SK-N-SH (cell line): ENCODE measurements at regions of chr11 and their contacts with region 1.

Region 1: GRCh38 chr11:58524232-58525036 is 16.5 kb upstream of the OR5B21 start:
- DNase-seq: peak; percentile 61
- H3K4me3 ChIP-seq: peak overlapping the region in 1 of 2 experiments; percentile 13; a peak in 1 of 4 replicates
- H3K27ac ChIP-seq: no peak overlapping the region
- H3K4me1 ChIP-seq: no peaks in the 10 kb centered on the region
- H3K27me3 ChIP-seq: no peaks in the 10 kb centered on the region; the same call in 1 of the 2 replicates
- CTCF ChIP-seq: peak; percentile 79
- EP300 ChIP-seq: no peak
- RAD21 ChIP-seq: peak; percentile 66

Region 2: DNA sequence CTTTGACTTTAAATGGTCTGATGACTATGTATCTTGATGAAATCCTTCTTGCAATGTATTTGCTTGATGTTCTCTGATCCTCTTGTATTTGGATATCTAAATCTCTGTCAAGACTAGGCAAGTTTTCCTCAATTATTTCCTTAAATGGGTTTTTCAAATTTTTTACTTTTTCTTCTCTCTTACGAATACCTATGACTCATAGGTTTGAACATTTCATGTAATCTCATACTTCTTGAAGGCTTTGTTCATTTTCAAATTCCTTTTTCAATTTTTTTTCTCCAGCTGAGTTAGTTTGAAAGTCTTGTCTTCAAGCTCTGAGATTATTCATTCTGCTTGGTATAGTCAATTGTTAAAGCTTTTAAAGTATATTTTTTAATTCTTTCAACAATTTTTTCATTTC is 269.5 kb before region 1 on chr11:
- CTCF ChIA-PET with region 1: no interaction called
- POLR2A ChIA-PET with region 1: no interaction called
- DNase-seq: no peak
- H3K4me3 ChIP-seq: no peak overlapping the region
- H3K27ac ChIP-seq: no peak overlapping the region
- H3K4me1 ChIP-seq: no peaks in the 10 kb centered on the region
- H3K27me3 ChIP-seq: no peaks in the 10 kb centered on the region
- CTCF ChIP-seq: no peak
- EP300 ChIP-seq: no peak
- RAD21 ChIP-seq: no peak

Region 3: DNA sequence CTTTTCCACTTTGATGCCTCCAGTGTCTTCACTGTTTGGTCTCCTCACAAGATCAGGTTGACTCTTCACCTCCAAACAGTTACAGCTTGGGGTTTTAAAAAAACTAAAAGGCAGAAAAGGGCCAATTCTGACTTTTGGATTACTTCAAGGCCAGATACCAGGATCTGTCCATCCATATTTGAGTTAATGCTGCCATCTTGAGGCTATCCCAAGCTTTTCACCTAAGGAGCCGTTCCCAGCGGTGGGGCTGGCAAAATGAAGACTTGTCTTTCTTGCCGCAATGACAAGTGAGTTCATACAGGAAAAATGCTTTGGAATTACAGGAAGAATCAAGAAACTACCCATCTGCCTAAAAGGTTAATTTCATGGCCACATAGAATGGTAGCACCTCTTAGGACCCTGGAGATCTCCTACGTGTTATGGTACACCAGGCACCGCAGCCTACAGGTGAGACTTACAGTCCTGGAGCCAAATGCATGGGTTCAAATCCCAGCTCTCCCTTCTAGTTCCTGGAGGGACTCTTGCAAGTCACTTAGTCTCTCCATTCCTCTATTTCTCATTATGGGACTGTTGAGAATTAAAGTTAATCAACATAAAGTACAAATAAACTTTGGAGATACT is 10.6 kb before region 1 on chr11:
- CTCF ChIA-PET with region 1: interaction called, 27 read pairs
- POLR2A ChIA-PET with region 1: no interaction called
- DNase-seq: peak; percentile 29
- H3K4me3 ChIP-seq: peak overlapping the region in 1 of 2 experiments; percentile 16; a peak in 1 of 4 replicates
- H3K27ac ChIP-seq: no peak overlapping the region
- H3K4me1 ChIP-seq: no peaks in the 10 kb centered on the region
- H3K27me3 ChIP-seq: peaks cover 7% of the 10 kb centered on the region; the same call in 1 of the 2 replicates
- CTCF ChIP-seq: peak; percentile 83
- EP300 ChIP-seq: no peak
- RAD21 ChIP-seq: peak; percentile 79

Region 4: GRCh38 chr11:58592760-58593472 is 68.5 kb after region 1 on chr11:
- CTCF ChIA-PET with region 1: no interaction called
- POLR2A ChIA-PET with region 1: no interaction called
- DNase-seq: no peak
- H3K4me3 ChIP-seq: no peak overlapping the region
- H3K27ac ChIP-seq: no peak overlapping the region
- H3K4me1 ChIP-seq: no peaks in the 10 kb centered on the region; a peak in 1 of 4 replicates
- H3K27me3 ChIP-seq: no peaks in the 10 kb centered on the region
- CTCF ChIP-seq: no peak
- EP300 ChIP-seq: no peak
- RAD21 ChIP-seq: no peak